ENCODE measurements at regions of chr3 and their contacts with region 1.

Region 1: GRCh38 chr3:177359593-177360357 is 162.5 kb upstream of the TBL1XR1 start:
- DNase-seq: peak; percentile 86 to 98 (median 94)

Region 2: GRCh38 chr3:177013681-177014280 is 346.0 kb before region 1 on chr3:
- intact Hi-C with region 1: no loop called
- DNase-seq: no peak

Region 3: GRCh38 chr3:177045767-177046166 is 314.0 kb before region 1 on chr3:
- intact Hi-C with region 1: loop called (anchors 5 kb)
- DNase-seq: no peak

Region 4: DNA sequence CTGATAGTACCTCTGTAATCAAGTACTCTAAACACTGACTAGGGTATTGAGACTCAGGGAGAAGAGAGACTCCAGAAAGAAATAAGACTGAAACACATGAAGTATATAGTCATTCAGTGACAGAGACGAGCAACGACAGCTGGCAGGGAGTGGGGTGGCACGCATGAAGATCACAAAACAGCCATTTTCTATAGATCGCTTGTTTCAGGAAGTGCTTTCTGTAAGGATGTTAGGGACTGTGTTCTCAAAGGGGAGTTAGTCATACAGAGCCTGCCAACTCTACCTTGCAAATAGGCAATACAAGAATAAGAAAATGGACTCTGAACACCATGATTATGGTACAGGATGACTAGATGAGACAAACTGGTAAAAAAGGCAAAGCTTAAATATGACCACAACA is 302.0 kb before region 1 on chr3:
- intact Hi-C with region 1: loop called (anchors 5 kb)
- DNase-seq: no peak

Region 5: GRCh38 chr3:177197041-177197727 is 162.6 kb before region 1 on chr3 and contains the start of gene TBL1XR1:
- intact Hi-C with region 1: loop called (anchors 1 kb)
- DNase-seq: peak; percentile 88 to 98 (median 94)

Region 6: GRCh38 chr3:177478170-177478860 is 118.5 kb after region 1 on chr3:
- intact Hi-C with region 1: loop called (anchors 10 kb)
- DNase-seq: no peak

Region 7: GRCh38 chr3:177624514-177625495 is 265.0 kb after region 1 on chr3:
- intact Hi-C with region 1: loop called (anchors 10 kb)
- DNase-seq: no peak

Region 8: GRCh38 chr3:177777699-177778098 is 417.9 kb after region 1 on chr3:
- intact Hi-C with region 1: loop called (anchors 5 kb)
- DNase-seq: peak in 40 of 42 donors; percentile 13 to 86 (median 59)